Mammary epithelial cell (primary cell): ENCODE measurements at regions of chr6 and their contacts with region 1.

Region 1: GRCh38 chr6:151475653-151476523 is 17.9 kb upstream of the CCDC170 start:
- DNase-seq: peak; percentile 17
- H3K4me3 ChIP-seq: no peak overlapping the region
- H3K27ac ChIP-seq: no peak overlapping the region
- H3K4me1 ChIP-seq: no peaks in the 10 kb centered on the region
- H3K27me3 ChIP-seq: no peaks in the 10 kb centered on the region
- CTCF ChIP-seq: peak; percentile 68 to 75

Region 2: DNA sequence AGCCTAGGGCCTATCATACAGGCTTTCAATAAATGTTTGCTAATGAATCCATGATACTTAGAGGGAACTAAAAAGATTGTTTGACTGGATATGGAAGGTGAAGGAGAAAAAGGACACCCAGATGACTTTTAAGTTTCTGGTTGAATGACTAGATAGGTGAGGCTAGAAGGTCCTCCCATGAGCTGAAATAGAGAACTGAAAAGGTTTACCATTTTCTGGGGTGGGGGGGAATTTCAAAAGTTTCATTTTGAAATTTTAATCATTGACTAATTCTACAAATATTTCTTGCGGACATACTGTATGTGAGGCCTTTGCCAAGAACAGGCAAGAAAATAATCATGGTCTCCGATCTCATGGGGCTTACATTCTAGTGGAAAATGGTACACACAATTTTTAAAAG is 66.6 kb before region 1 on chr6:
- CTCF ChIA-PET with region 1: interaction called, 3 read pairs
- dilution Hi-C with region 1: no loop called
- in situ Hi-C with region 1: no loop called
- intact Hi-C with region 1: loop called (anchors 5 kb)
- DNase-seq: no peak
- H3K4me3 ChIP-seq: no peak overlapping the region
- H3K27ac ChIP-seq: no peak overlapping the region
- H3K4me1 ChIP-seq: no peaks in the 10 kb centered on the region
- H3K27me3 ChIP-seq: no peaks in the 10 kb centered on the region
- CTCF ChIP-seq: no peak

Region 3: GRCh38 chr6:151440930-151441329 is 35.0 kb before region 1 on chr6:
- CTCF ChIA-PET with region 1: interaction called, 3 read pairs
- dilution Hi-C with region 1: no loop called
- in situ Hi-C with region 1: no loop called
- intact Hi-C with region 1: loop called (anchors 1 kb)
- DNase-seq: no peak
- H3K4me3 ChIP-seq: no peak overlapping the region
- H3K27ac ChIP-seq: no peak overlapping the region
- H3K4me1 ChIP-seq: peaks cover 21% of the 10 kb centered on the region
- H3K27me3 ChIP-seq: no peaks in the 10 kb centered on the region
- CTCF ChIP-seq: peak in 1 of 2 donors; percentile 36